ENCODE measurements at regions of chr11 and their contacts with region 1.

Region 1: DNA sequence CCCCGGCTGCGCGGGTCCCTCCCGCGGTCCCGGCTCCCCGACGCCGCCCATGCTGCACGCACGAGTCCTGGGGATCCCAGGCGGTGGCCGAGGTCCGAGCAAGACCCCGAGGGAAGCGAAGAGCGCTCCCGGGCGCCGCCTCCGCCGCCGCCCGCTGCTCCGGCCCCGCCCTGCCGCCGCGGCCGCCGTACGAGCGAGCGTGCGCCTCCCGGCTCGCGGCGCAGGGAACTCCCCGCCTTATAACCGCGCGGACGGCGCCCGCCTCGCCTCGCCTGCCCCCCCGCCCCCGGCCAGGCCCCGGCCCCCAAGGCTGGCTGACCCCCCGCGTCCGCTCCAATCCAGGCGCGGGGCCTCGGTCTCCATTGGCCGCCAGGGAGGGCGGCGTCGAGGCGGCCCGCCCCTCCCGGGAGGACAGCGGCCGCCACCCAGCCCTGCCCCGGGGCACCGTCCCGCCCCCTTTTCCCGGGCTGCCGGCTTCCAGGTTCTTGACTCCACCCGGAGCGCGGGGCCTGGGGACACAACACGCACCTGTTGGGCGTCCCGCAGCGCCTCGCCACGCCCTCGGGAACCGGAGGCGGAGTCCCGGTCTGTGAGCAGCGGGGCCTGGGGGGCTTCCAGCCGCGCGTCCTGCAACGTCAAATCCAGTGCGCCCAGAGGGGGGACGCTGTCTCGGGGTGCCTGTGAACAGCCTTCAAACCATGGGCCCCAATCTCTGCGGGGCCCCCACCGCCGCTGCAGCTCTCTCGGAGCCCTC is at the start of gene FADS3:
- DNase-seq: peak; percentile 88 to 96
- H3K4me3 ChIP-seq: peak within 1 kb of the TSS; percentile 85 to 96
- H3K27ac ChIP-seq: peak within 1 kb of the TSS; percentile 87 to 92
- H3K4me1 ChIP-seq: peaks cover 0 to 56% (median 47%) of the 10 kb centered on the region in 4 donors
- H3K27me3 ChIP-seq: no peaks in the 10 kb centered on the region
- CTCF ChIP-seq: no peak

Region 2: DNA sequence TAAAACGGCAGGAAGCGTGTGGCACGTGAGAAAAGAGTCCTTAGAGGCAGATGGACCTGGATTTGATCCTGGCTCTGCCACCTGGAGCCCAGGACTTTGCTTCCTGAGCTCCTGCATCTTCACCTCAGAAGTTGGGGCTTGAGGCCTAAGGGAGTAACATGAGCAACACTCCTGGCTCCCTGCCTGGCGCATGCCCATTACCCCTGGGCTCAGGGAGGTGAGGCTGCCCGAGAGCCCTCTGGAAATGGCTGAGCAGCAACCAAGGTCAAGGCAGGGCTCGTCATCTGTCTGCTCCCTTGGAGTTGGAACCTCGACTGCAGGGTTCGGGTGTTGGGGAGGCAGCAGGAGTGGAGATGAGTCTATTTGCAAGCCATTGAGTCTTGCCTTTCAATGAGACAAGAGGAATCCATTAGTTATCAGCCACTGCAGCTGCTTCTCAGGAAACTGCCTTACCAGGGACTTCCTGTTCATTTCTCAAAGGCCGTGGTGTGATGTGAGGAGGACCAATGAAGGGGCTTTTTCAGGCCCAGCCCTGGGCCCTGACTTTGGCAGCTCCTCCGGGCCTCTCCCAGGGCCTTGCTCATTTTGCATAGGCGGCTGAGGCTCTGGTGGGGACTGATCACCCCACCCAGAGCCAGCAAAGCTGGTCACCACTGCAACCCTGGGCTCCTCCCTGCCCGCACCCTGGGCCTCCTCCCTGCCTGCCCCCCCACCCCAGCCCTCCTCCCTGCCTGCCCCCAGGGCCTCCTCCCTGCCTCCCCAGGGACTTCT is 57.0 kb before region 1 on chr11:
- intact Hi-C with region 1: loop called (anchors 5 kb)
- DNase-seq: peak; percentile 69 to 90
- H3K4me3 ChIP-seq: peak overlapping the region in 1 of 2 donors; percentile 10
- H3K27ac ChIP-seq: peak overlapping the region; percentile 77 to 92
- H3K4me1 ChIP-seq: peaks cover 0 to 75% (median 64%) of the 10 kb centered on the region in 4 donors
- H3K27me3 ChIP-seq: no peaks in the 10 kb centered on the region
- CTCF ChIP-seq: no peak

Region 3: DNA sequence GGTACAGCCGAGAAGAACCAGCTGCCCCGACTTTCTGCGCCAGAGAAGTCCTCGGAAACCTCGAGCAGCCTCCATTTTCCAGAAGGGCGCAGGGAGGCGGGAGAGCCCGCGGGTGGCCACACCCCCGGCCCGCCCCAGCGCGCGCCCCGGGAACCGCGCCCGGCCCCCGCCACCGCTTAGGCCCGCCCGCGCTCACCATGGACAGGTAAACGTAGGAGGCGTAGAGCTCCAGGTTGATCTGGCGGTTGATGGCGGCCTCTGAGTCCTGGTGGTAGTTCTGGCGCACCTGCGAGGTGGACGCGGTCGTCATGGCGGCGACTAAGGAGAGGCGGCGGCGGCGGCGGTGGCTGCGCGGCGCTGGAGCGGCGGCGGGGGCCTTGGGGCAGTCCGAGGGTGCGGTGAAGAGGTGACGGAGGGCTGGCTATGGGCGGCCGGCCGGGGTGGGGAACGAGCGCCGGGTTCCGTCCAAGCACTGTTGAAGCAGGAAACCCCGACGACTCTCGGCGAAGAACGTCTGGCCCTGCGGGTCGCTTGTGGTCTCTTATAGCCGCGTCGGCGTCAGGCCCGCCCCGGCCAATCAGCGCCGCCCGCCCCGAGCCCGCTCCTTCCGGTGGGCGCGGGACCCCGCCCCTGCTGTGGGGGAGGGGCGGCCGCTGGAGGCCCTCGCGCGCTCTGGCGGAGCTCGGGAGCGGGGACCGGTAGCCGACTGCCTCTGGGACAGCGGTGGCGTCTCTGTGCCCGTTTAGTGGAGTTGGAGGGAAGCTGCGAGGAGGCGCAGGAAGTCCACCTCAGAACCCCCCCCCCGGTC is 75.8 kb after region 1 on chr11 and contains the start of gene FTH1:
- intact Hi-C with region 1: loop called (anchors 5 kb)
- DNase-seq: peak; percentile 87 to 96
- H3K4me3 ChIP-seq: peak within 1 kb of the TSS; percentile 68 to 95
- H3K27ac ChIP-seq: peak within 1 kb of the TSS; percentile 98 to 100
- H3K4me1 ChIP-seq: peaks cover 6 to 79% (median 63%) of the 10 kb centered on the region in 4 donors
- H3K27me3 ChIP-seq: no peaks in the 10 kb centered on the region
- CTCF ChIP-seq: peak in 1 of 2 experiments; percentile 5

Region 4: GRCh38 chr11:62025487-62026105 is 134.1 kb after region 1 on chr11:
- intact Hi-C with region 1: no loop called
- DNase-seq: peak; percentile 76 to 83
- H3K4me3 ChIP-seq: no peak overlapping the region
- H3K27ac ChIP-seq: no peak overlapping the region
- H3K4me1 ChIP-seq: no peaks in the 10 kb centered on the region
- H3K27me3 ChIP-seq: no peaks in the 10 kb centered on the region
- CTCF ChIP-seq: no peak

Region 5: DNA sequence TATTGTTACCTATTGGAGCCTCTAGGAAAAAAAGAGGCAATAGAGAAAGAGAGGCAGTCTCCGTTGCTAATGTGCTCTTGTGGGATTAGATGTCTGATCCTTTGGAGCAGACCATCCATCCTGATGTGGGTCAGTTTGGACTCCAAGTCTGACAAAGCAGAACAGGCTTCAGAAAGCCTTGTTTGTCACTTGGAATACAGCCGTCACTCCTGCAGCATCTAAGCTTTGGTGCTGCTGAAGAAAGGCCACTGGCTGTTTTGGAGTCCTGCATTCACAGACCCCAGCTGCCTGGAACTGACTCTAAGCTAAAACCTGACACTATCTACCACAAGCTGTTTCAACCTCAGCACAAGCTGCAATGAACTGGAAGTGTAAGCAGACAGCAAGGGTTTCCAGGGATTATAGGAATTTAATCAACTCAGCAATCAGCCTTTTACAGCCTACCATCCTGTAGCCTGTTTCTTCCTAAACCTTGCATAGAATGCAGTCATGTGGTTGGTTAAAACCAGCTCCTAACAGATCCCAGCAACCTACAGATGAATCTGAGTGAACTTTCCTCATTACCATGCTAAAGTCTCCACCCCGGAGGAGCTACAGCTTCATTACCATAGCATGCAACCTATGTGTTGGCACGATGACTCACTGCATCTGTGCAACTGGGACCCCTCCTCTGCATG is 1641.4 kb after region 1 on chr11:
- intact Hi-C with region 1: no loop called
- DNase-seq: no peak
- H3K4me3 ChIP-seq: no peak overlapping the region
- H3K27ac ChIP-seq: peak overlapping the region in 1 of 2 donors; percentile 18
- H3K4me1 ChIP-seq: peaks cover 0 to 38% (median 29%) of the 10 kb centered on the region in 4 donors
- H3K27me3 ChIP-seq: no peaks in the 10 kb centered on the region
- CTCF ChIP-seq: no peak